Activated naive CD4-positive, alpha-beta T cell treated with anti-CD3 and anti-CD28 coated beads for 36 hours (primary cell): ENCODE measurements at regions of chr2 and their contacts with region 1.

Region 1: DNA sequence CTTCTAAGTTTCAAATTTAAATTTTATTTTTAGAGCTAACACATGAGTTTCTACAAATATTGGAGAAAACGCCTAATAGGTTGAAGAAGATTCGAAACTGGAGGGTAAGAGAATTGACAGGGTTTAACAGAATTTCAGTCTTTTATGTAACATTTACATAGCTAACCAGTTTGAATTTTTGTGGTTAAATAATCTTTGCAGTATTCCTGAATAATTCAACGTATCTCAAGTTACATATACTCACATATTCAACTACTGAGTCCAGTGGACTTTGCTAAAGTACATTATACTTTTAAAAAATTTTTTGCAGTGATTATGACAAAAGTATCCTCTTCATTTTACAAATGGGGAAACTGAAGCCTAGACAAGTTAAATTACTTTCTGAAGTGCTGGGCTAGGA is 34.0 kb downstream of the CCNT2 start:
- DNase-seq: no peak
- H3K4me3 Mint-ChIP-seq: no peak overlapping the region
- H3K27ac Mint-ChIP-seq: no peak overlapping the region
- H3K4me1 Mint-ChIP-seq: peaks cover 22% of the 10 kb centered on the region
- H3K27me3 Mint-ChIP-seq: no peaks in the 10 kb centered on the region

Region 2: DNA sequence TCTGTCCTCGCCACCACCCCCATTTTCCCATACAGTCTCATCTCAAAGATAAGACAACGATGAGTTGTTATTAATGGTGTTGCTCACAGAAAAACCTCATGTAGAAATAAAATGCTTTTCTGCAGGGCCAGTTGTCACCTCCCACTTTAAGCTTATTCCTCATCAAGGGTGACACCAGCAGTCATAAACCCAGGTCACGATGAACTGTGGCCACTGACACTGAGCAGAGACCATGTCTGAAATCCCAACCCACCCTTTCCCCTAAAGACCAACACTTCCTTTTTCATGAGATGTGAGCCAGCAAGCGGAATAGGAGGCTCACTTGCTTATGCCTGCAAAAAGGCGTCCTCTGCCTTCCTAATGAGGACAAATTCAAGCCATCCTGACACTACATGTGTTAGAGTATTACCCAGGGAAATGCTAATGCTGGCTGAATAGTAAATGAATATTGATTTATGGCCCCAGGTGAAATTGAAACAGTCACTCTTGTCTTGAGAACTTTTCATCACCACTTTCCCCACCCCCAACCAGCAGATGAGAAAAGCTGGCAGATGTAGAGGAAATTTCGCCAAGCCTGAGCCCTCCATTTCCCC is 470.4 kb before region 1 on chr2:
- CTCF ChIA-PET with region 1: no interaction called
- intact Hi-C with region 1: no loop called
- DNase-seq: no peak
- H3K4me3 Mint-ChIP-seq: no peak overlapping the region
- H3K27ac Mint-ChIP-seq: no peak overlapping the region
- H3K4me1 Mint-ChIP-seq: no peaks in the 10 kb centered on the region
- H3K27me3 Mint-ChIP-seq: peaks cover 2% of the 10 kb centered on the region

Region 3: GRCh38 chr2:134603966-134604365 is 348.6 kb before region 1 on chr2:
- CTCF ChIA-PET with region 1: no interaction called
- intact Hi-C with region 1: no loop called
- DNase-seq: no peak
- H3K4me3 Mint-ChIP-seq: no peak overlapping the region
- H3K27ac Mint-ChIP-seq: no peak overlapping the region
- H3K4me1 Mint-ChIP-seq: no peaks in the 10 kb centered on the region
- H3K27me3 Mint-ChIP-seq: peaks cover 8% of the 10 kb centered on the region

Region 4: GRCh38 chr2:134932864-134933526 is 19.6 kb before region 1 on chr2:
- CTCF ChIA-PET with region 1: interaction called, 3 read pairs
- intact Hi-C with region 1: loop called (anchors 2 kb)
- DNase-seq: no peak
- H3K4me3 Mint-ChIP-seq: no peak overlapping the region
- H3K27ac Mint-ChIP-seq: no peak overlapping the region
- H3K4me1 Mint-ChIP-seq: peaks cover 63% of the 10 kb centered on the region
- H3K27me3 Mint-ChIP-seq: no peaks in the 10 kb centered on the region

Region 5: DNA sequence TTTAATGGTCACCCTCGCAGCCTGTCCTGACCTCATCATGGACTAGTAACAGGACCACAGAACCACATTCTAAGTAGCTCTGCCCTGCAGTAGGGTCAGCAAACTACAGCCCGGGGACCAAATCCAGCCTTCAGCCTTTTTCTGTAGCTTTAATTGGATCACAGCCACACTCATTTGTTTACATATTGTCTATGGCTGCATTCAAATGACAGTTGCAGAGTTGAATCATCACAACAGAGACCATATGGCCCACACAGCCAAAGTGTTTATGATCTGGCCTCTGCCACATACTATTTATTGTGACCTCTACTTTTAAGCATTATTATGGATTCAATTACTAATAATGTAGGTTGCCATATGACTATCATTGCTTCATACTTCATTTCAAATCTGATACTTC is 46.9 kb after region 1 on chr2:
- CTCF ChIA-PET with region 1: no interaction called
- intact Hi-C with region 1: no loop called
- DNase-seq: no peak
- H3K4me3 Mint-ChIP-seq: no peak overlapping the region
- H3K27ac Mint-ChIP-seq: no peak overlapping the region
- H3K4me1 Mint-ChIP-seq: peaks cover 4% of the 10 kb centered on the region
- H3K27me3 Mint-ChIP-seq: peaks cover 3% of the 10 kb centered on the region

Region 6: DNA sequence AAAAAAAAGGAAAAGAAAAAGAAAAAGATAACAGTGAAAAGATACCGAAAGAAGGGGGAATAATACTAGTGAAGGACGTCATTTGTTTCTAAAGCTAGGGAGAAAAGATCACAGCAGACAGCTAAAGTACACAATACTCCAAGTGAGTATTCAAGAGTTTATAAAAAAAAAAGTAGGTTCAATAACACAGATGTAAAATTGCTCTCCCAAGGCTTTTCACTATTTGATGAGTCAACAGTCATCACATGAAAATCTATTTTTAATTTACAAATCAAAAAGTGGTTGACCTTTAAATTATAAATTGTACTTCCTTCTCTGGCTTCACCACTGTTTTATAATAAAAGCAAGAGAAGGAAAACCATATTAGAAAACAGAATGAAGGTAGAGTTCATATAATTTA is 434.4 kb after region 1 on chr2:
- CTCF ChIA-PET with region 1: no interaction called
- intact Hi-C with region 1: no loop called
- DNase-seq: no peak
- H3K4me3 Mint-ChIP-seq: no peak overlapping the region
- H3K27ac Mint-ChIP-seq: no peak overlapping the region
- H3K4me1 Mint-ChIP-seq: no peaks in the 10 kb centered on the region
- H3K27me3 Mint-ChIP-seq: no peaks in the 10 kb centered on the region